A673 (cell line): ENCODE measurements at regions of chr14 and their contacts with region 1.

Region 1: GRCh38 chr14:69818757-69819191 is 21.7 kb upstream of the SLC10A1 start:
- DNase-seq: peak; percentile 80
- H3K4me3 ChIP-seq: no peak overlapping the region
- H3K27ac ChIP-seq: no peak overlapping the region
- H3K4me1 ChIP-seq: no peaks in the 10 kb centered on the region
- H3K27me3 ChIP-seq: peaks cover 36% of the 10 kb centered on the region
- CTCF ChIP-seq: peak; percentile 88

Region 2: GRCh38 chr14:70013269-70013873 is 194.6 kb after region 1 on chr14:
- CTCF ChIA-PET with region 1: no interaction called
- POLR2A ChIA-PET with region 1: no interaction called
- intact Hi-C with region 1: loop called (anchors 5 kb)
- DNase-seq: peak; percentile 52
- H3K4me3 ChIP-seq: no peak overlapping the region
- H3K27ac ChIP-seq: no peak overlapping the region
- H3K4me1 ChIP-seq: no peaks in the 10 kb centered on the region
- H3K27me3 ChIP-seq: peaks cover 3% of the 10 kb centered on the region
- CTCF ChIP-seq: peak; percentile 84

Region 3: DNA sequence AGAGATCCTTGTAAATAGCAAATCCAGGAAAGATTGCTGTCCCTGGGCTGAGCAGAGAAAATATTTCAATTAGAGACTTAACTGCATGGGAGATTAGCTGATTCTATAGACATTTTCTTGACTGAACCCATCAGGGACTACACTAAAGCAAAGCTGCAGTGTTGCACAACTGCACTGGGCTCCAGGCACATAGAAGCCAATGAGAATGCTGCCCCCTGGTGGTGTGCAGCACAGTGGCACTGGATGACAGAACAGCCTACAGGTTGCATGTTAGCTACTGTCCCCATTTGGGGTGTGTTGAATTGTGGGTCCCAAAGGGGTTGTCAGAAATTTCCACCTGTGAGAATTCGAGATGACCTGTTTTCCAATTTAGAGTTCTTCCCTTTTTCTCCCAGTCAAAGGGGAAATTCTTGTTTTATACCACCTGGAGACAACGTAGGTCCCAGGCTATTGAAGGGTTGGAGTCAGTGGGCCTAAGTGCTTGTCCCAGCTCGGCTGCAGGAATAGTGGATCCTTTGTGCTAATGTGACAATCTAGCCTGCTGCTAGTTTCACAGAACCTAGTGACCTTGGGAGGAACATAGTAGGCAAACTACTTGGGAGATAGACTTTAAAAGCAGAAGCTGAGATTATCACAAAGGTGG is 255.3 kb after region 1 on chr14:
- CTCF ChIA-PET with region 1: interaction called, 5 read pairs
- POLR2A ChIA-PET with region 1: no interaction called
- intact Hi-C with region 1: loop called (anchors 1 kb)
- DNase-seq: peak; percentile 79
- H3K4me3 ChIP-seq: no peak overlapping the region
- H3K27ac ChIP-seq: no peak overlapping the region
- H3K4me1 ChIP-seq: no peaks in the 10 kb centered on the region
- H3K27me3 ChIP-seq: peaks cover 51% of the 10 kb centered on the region
- CTCF ChIP-seq: peak; percentile 93